ENCODE measurements at regions of chr4 and their contacts with region 1.

Region 1: DNA sequence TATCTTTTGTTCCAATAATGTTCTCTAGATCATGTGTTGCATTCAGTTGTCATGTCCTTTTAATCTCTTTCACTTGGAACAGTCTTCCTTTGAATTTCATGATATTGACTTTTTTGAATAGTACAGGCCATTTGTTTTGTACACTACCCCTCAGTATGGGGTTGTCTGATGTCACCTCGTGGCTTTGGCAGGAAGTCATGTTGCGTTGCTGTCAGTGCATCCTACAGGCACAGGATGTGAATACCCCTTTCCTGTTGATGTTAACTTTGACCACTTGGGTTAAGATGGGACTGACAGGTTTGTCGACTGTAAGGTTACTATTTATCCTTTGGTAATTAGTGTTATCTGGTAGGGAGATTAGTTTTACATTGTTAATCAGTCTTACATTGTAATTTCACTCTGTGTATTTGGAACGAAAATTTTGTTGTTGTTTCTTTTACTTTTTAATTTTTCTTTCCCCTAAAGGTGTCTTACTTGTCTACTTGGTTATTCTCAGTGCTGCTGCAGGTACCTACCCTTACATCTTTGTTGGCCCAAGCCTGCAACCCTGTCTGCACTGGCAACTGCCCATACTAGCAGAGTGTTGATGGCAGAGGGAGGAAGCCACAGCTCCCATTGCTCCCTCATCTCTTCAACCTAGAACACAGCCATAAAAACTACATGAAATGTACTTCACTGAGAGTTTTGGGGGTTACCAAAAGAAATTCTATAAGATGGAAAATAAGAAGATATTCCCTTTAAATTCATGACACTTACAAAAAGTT is 14.7 kb upstream of the ATP8A1 start:
- DNase-seq: no peak
- H3K4me3 ChIP-seq: no peak overlapping the region
- H3K27ac ChIP-seq: no peak overlapping the region
- H3K4me1 ChIP-seq: no peaks in the 10 kb centered on the region
- H3K27me3 ChIP-seq: peaks cover 0 to 33% of the 10 kb centered on the region in 2 donors
- CTCF ChIP-seq: no peak
- POLR2A ChIP-seq: no peak

Region 2: GRCh38 chr4:42655878-42656678 is 15.5 kb before region 1 on chr4:
- intact Hi-C with region 1: loop called (anchors 1 kb)
- DNase-seq: peak; percentile 22 to 54
- H3K4me3 ChIP-seq: peak overlapping the region; percentile 63 to 92 (median 73)
- H3K27ac ChIP-seq: peak overlapping the region; percentile 6 to 39
- H3K4me1 ChIP-seq: peaks cover 0 to 9% of the 10 kb centered on the region in 2 donors
- H3K27me3 ChIP-seq: no peaks in the 10 kb centered on the region
- CTCF ChIP-seq: no peak
- POLR2A ChIP-seq: no peak